Activated naive CD4-positive, alpha-beta T cell treated with anti-CD3 and anti-CD28 coated beads, Interleukin-2, amount 10 ng/mL, durations not matched to agents 7 days and 5 days (primary cell): ENCODE measurements at regions of chr3 and their contacts with region 1.

Region 1: DNA sequence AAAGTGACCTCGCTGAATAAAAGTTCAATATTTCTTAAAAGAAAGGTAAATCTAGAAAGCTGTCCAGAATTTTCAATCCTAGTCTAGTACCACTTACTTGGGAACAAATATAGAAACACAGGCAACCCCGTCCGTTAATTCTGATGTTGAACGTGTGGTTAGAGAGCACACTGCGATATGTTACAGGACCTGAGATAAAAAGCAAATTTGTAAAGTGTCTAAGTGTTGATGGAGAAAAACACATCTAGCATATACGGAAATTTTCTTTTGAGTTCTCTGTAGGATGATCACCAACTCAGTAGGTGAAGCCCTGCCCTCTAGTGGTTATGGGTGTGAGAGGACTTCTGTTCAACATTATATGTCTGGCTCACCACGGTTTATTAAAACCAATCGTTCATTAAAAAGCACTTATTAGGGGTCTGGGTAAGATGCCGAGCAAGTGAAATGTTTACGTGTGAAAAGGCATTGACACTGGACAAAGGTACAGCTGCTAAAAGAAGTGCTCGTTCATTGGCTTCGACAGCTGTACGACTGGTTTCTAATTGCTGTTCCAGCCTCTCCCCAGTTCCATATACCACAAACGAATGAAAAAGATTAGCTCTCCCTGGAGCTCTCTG is 1.0 kb upstream of the ATP2C1 start:
- DNase-seq: peak; percentile 77
- H3K4me3 Mint-ChIP-seq: peak overlapping the region; percentile 94
- H3K27ac Mint-ChIP-seq: peak overlapping the region; percentile 94
- H3K4me1 Mint-ChIP-seq: peaks cover 40% of the 10 kb centered on the region
- H3K27me3 Mint-ChIP-seq: no peaks in the 10 kb centered on the region

Region 2: DNA sequence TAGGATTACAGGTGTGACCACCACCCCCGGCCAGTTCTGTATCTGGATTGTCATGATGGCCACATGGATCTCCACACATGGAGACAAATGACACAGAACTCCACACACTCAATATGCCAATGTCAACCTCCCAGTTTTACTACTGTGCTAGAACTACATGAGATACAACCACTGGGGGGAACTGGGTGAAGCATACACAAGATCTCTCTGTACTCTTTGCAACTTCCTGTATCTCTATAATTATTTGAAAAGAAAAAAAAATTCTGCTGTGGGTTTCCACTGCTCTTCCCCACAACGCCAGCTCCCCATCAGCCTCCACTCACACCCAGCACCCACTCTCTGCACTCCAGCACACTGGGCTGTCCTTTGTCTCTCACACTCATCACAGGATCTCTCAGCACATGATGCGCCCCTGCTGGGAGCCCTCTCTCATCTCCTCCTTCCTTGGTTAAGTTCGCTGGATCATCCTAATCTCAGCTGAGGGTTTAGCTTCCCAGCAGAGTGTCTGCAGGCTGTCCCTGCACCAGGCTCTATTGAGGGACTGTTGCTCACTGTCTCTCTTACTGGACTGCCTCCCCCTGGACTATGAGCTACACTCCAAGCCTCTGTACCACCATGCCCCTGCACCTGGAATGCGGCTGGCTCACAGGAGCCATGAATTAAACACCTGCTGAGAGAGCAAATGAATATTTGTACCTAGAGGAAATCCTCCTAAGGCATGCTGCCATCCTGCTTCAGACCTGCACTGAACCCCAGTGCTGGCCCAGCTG is 1760.6 kb before region 1 on chr3:
- CTCF ChIA-PET with region 1: no interaction called
- DNase-seq: no peak
- H3K4me3 Mint-ChIP-seq: no peak overlapping the region
- H3K27ac Mint-ChIP-seq: peak overlapping the region; percentile 37
- H3K4me1 Mint-ChIP-seq: peaks cover 6% of the 10 kb centered on the region
- H3K27me3 Mint-ChIP-seq: no peaks in the 10 kb centered on the region

Region 3: DNA sequence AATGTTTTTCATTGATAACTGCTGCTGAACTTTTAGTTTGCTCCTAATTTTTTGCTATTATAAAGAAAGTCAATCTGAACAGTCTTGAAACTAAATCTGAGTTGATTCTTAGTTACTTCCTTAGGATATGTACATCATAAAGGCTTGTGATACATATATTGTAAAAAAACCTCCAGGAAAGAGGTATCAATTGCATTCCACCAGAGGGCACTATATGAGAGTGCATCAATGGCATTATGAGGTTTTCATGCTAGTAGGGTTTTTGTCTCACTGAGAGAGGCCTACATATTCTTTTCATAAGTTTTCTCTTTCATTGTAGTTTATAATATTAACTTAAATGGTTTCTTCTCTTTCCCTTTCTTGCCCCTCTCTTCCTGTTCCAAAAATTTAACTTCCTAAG is 193.1 kb before region 1 on chr3:
- CTCF ChIA-PET with region 1: interaction called, 27 read pairs
- DNase-seq: no peak
- H3K4me3 Mint-ChIP-seq: no peak overlapping the region
- H3K27ac Mint-ChIP-seq: no peak overlapping the region
- H3K4me1 Mint-ChIP-seq: no peaks in the 10 kb centered on the region
- H3K27me3 Mint-ChIP-seq: no peaks in the 10 kb centered on the region

Region 4: GRCh38 chr3:130759699-130760338 is 133.0 kb before region 1 on chr3:
- CTCF ChIA-PET with region 1: interaction called, 46 read pairs
- DNase-seq: peak; percentile 68
- H3K4me3 Mint-ChIP-seq: no peak overlapping the region
- H3K27ac Mint-ChIP-seq: no peak overlapping the region
- H3K4me1 Mint-ChIP-seq: peaks cover 12% of the 10 kb centered on the region
- H3K27me3 Mint-ChIP-seq: peaks cover 6% of the 10 kb centered on the region

Region 5: GRCh38 chr3:130850044-130850797 is 42.6 kb before region 1 on chr3:
- CTCF ChIA-PET with region 1: interaction called, 16 read pairs
- DNase-seq: peak; percentile 51
- H3K4me3 Mint-ChIP-seq: peak overlapping the region; percentile 14
- H3K27ac Mint-ChIP-seq: peak overlapping the region; percentile 26
- H3K4me1 Mint-ChIP-seq: peaks cover 24% of the 10 kb centered on the region
- H3K27me3 Mint-ChIP-seq: peaks cover 11% of the 10 kb centered on the region